OCI-LY7 (cell line): ENCODE measurements at regions of chr4 and their contacts with region 1.

Region 1: GRCh38 chr4:153426207-153426885 is 39.8 kb upstream of the TMEM131L start:
- DNase-seq: peak; percentile 90
- H3K4me3 ChIP-seq: peak overlapping the region; percentile 37
- H3K27ac ChIP-seq: peak overlapping the region; percentile 94
- H3K4me1 ChIP-seq: peaks cover 75% of the 10 kb centered on the region
- CTCF ChIP-seq: no peak

Region 2: DNA sequence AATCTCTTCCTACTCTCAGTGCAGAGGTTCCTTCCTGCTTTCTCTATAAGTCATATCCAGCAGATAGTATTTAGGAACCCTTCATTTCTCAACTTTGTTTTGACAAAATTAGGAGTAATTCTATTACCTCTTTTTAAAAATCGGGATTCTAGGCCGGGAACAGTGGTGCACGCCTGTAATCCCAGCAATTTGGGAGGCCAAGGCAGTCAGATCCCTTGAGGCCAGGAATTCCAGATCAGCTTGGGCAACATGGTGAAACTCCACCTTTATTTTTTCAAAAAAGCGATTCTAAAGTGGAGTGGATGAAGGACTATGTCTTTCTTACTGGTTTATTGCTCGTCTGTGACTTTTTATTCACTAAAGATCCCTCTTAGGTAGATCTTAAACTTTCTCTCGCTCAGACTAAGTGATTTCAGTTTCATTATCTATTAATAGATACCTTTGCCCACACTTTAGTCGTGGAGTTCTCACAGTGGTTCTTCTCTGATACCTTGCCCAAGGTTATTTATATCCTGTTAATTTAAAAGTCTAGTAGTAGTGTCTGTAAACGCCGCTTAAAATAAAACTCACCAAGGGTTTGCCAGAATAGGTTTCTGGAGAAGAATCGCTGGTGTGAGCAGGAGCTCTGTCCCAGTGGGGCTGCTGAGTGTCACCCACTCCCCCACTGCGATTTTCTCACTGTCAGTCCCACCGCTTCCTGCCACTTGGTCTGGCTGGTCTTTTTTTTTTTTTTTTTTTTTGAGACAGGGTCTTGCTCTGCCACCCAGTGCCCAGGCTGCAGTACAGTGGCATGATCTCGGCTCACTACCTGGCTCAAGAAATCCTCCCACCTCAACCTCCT is 12.8 kb after region 1 on chr4:
- CTCF ChIA-PET with region 1: no interaction called
- POLR2A ChIA-PET with region 1: interaction called, 33 read pairs
- intact Hi-C with region 1: no loop called
- DNase-seq: peak; percentile 81
- H3K4me3 ChIP-seq: peak overlapping the region; percentile 67
- H3K27ac ChIP-seq: peak overlapping the region; percentile 94
- H3K4me1 ChIP-seq: peaks cover 94% of the 10 kb centered on the region
- CTCF ChIP-seq: peak; percentile 49